Heart right ventricle (tissue), 16 donors: ENCODE measurements at regions of chr9 and their contacts with region 1.

Region 1: DNA sequence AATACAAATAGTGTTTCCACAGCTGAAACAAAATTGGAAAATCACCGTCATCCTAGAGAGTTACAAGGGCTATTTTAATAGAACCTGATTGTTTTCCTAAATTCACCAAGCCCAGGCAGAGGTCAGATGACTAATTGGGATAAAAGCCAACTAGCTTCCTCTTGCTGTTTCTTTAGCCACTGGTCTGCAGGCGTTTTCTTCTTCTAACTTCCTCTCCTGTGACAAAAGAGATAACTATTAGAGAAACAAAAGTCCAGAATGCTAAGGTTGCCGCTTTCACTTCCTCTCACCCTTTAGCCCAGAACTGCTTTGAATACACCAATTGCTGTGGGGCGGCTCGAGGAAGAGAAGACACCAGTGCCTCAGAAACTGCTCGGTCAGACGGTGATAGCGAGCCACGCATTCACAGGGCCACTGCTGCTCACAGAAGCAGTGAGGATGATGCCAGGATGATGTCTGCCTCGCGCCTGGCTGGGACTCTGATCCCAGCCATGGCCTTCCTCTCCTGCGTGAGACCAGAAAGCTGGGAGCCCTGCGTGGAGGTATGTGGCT is at the start of gene TLR4:
- DNase-seq: peak; percentile 52 to 78
- ATAC-seq: peak; percentile 86 to 94 (median 92)
- H3K4me3 ChIP-seq: peak within 1 kb of the TSS; percentile 27 to 68 (median 56)
- H3K27ac ChIP-seq: peak within 1 kb of the TSS; percentile 63 to 95 (median 88)
- H3K4me1 ChIP-seq: peaks cover 0 to 38% (median 22%) of the 10 kb centered on the region in 9 donors
- H3K27me3 ChIP-seq: no peaks in the 10 kb centered on the region
- CTCF ChIP-seq: no peak
- total RNA-seq, gene TLR4: 6.5 to 24.7 (median 11.6) TPM

Region 2: DNA sequence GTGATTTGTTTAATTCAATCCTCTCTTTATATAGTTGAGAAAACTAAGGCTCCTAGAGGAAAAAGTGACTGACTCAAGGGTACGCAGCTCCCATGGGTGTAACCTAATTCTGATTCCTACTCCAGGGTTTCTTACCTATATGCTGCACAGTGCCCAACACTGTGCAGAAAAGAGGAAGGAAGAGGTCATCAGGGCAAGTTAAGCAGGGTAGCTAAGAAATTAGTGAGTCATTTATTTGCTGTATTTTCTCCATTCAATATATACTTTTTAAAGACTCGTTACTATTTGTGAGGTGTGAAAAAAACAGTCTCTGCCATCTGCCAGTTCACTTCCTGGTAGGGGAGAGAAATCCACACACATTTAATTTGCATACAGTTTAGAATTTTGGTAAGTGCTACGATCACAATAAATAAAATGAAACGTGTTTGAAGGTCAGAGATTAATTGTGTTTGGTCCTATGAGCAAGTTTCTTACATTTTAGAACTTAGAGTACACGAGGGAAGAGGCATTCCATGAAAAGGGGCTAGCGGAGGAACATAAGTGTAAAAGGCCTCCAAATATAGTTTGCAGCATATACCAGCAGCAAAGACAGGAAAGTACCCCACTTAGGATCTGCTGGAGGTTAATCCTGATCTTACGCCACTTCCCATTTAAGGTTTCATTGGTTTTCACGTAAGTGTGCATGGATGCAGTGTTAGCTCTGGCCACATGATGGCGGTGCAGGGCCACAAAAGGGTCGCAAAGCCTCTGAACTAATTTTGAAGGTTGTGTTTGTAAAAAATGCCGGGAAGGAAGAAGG is 59.8 kb before region 1 on chr9:
- intact Hi-C with region 1: loop called in 1 of 10 experiments (anchors 2 kb)
- DNase-seq: peak; percentile 71 to 73
- ATAC-seq: peak; percentile 55 to 92 (median 82)
- H3K4me3 ChIP-seq: peak overlapping the region in 8 of 10 donors; percentile 15 to 48 (median 38)
- H3K27ac ChIP-seq: peak overlapping the region in 6 of 10 donors; percentile 37 to 80 (median 63)
- H3K4me1 ChIP-seq: peaks cover 0 to 25% (median 13%) of the 10 kb centered on the region in 9 donors
- H3K27me3 ChIP-seq: peaks cover 0 to 46% (median 17%) of the 10 kb centered on the region in 7 donors
- CTCF ChIP-seq: peak; percentile 92 to 99 (median 97)

Region 3: GRCh38 chr9:117678871-117679270 is 25.2 kb before region 1 on chr9:
- intact Hi-C with region 1: loop called in 1 of 10 experiments (anchors 1 kb)
- DNase-seq: no peak
- ATAC-seq: peak in 3 of 8 donors; percentile 30 to 67 (median 39)
- H3K4me3 ChIP-seq: peak overlapping the region in 2 of 10 donors; percentile 14 to 27
- H3K27ac ChIP-seq: peak overlapping the region in 8 of 10 donors; percentile 30 to 79 (median 46)
- H3K4me1 ChIP-seq: peaks cover 0 to 48% (median 14%) of the 10 kb centered on the region in 9 donors
- H3K27me3 ChIP-seq: no peaks in the 10 kb centered on the region
- CTCF ChIP-seq: no peak

Region 4: DNA sequence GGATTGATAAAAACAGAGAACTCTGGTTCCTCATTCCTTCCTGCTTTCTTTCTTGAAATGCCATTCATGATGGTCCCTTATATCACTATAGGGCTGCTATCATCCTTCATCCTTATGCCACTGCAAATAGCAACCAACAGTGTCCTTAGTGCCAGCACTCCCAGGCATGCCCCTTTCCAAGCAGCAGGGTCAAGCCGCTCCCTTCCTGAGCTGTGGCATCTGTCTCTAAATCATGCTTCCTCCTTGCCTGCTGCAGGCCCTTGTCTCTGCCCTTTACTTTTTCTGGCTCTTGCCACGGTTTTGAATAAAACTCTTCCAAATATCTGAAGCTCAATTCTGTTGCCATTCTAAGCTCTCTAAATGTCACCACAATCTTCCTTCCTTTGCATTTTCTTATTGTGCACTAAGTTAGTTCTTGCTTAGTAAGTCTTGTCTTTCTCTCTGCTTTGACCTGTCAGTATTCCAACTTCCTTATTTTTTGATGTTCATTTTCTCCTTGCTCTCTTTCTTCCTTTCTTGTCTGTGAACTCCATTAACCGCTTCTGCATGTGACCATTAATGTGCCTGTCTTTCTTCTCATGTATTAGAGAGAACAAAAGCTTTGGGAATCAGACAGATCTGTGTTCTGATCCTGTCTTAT is 20.0 kb after region 1 on chr9:
- intact Hi-C with region 1: loop called in 1 of 10 experiments (anchors 2 kb)
- DNase-seq: no peak
- ATAC-seq: peak in 1 of 8 donors; percentile 13
- H3K4me3 ChIP-seq: no peak overlapping the region
- H3K27ac ChIP-seq: peak overlapping the region in 3 of 10 donors; percentile 1 to 85 (median 44)
- H3K4me1 ChIP-seq: peaks cover 21 to 74% (median 56%) of the 10 kb centered on the region in 9 donors
- H3K27me3 ChIP-seq: no peaks in the 10 kb centered on the region
- CTCF ChIP-seq: no peak

Region 5: GRCh38 chr9:117744856-117745389 is 40.8 kb after region 1 on chr9:
- intact Hi-C with region 1: loop called in 1 of 10 experiments (anchors 2 kb)
- DNase-seq: peak in 1 of 2 donors; percentile 17
- ATAC-seq: peak in 7 of 8 donors; percentile 59 to 73 (median 69)
- H3K4me3 ChIP-seq: peak overlapping the region in 9 of 10 donors; percentile 30 to 59 (median 49)
- H3K27ac ChIP-seq: peak overlapping the region in 3 of 10 donors; percentile 33 to 60 (median 51)
- H3K4me1 ChIP-seq: peaks cover 0 to 15% (median 8%) of the 10 kb centered on the region in 9 donors
- H3K27me3 ChIP-seq: peaks cover 0 to 29% (median 9%) of the 10 kb centered on the region in 7 donors
- CTCF ChIP-seq: no peak

Region 6: DNA sequence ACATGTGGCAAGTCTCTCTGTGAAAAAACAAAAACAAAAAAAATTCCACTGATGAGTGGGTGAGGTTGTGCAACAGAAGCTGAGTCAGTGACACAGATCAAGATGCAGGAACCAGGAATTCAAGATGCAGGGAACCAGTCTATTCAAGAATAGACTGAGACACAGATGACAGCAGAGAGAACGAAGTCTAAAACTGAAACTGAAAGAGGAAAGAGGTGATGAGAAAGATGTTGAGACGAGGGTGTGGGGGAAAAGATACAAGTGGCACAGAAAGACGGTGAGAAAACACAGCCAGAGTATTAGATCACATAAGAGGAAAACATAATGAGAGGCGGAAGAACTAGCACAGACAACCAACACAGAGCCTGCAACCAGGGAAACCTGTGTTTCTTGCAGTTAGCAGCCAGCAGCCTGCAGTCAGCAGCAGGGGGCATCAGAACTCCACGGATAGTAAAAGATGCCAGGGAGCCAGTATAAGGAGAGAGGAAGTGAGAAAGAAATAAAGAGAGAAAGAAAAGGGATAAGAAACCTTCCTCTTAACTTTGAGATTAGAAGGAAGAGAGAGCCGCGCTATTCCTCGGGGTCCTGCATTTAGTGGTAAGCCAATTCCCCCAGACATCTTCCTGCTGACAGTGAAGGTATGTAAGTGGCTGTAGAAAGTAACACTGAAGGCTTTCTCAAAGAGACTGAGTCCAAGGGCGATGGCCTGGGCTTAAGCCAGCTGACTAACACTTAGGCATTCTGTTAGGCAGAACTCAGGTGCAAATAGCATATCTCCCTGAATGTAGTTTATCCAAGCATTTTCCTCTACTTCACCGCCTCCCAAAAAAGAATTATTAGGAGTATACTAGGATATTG is 79.1 kb after region 1 on chr9:
- intact Hi-C with region 1: loop called in 3 of 10 experiments (anchors 5 to 10 kb)
- DNase-seq: peak; percentile 52 to 78
- ATAC-seq: peak; percentile 70 to 94 (median 93)
- H3K4me3 ChIP-seq: peak overlapping the region in 9 of 10 donors; percentile 11 to 58 (median 50)
- H3K27ac ChIP-seq: peak overlapping the region in 7 of 10 donors; percentile 25 to 87 (median 48)
- H3K4me1 ChIP-seq: peaks cover 0 to 42% (median 16%) of the 10 kb centered on the region in 9 donors
- H3K27me3 ChIP-seq: no peaks in the 10 kb centered on the region
- CTCF ChIP-seq: peak; percentile 58 to 94 (median 82)